HCT116 (cell line): ENCODE measurements at regions of chr2 and their contacts with region 1.

Region 1: DNA sequence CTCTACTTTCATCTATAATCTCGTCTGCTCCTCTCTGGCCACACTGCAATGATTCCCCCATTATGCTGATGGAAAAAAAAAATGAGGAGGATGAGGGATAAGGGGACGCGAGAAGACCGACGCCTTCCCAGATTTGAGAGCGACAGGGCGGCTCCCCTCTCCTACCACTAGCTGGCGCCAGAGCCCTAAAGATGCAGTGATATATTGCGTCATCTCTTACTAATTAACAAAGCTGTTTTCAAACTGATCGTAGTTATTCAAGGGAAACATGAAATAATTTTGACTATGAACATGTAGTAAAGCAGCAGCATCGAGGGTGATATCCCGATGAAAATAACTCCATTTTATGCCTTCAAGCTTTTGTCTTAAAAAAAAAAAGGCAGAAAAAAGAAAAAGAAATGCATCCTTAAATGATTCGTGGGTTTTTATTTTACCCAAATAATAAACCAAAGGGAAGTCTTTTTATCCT is 48.0 kb upstream of the HNRNPA3 start:
- DNase-seq: peak; percentile 68
- ATAC-seq: peak; percentile 46
- H3K4me3 ChIP-seq: peak overlapping the region; percentile 29 to 50
- H3K27ac ChIP-seq: peak overlapping the region; percentile 65; the same call in 1 of the 2 replicates
- H3K4me1 ChIP-seq: peaks cover 42 to 67% of the 10 kb centered on the region in 2 experiments
- H3K27me3 ChIP-seq: no peaks in the 10 kb centered on the region
- CTCF ChIP-seq: peak; percentile 96 to 100 (median 100)
- POLR2A ChIP-seq: no peak
- RAD21 ChIP-seq: peak; percentile 100

Region 2: DNA sequence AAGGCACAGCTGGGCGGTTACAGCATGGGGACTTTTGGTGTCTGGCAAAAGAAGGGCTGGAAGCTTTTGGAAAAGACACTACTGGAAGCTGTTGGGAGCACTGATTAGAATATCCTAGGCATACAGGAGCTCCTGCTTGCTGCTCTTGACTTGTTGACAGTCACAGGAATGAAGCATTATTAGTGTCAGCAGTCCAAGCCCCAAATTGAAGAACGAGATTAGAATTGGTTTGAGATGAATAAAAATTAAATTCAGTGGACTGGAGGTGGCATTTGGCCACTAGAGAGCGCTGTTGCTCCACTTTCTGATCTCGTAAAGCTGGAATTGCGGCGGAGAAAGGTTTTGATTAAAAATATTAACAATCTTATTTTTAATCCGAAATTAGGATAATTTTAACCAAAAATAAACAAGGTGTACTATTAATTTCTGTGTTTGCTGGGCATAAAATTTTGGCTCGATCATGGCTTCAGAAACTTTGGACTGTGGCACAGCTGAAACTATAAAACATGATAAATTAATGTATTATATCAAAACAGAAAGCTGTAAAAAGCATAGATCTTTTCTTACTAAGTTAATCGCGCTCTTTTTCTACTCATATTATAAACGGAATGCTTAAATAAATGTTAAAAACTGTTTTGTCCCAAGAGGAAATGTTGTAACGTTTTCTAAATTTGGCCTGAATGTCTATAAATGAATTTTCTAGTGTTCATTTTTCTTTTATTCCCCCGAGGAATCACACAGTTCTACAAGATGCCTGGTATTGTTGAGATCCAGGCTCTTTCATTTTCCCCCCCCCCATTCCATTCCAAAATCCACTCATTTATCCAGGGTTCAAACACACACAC is 1037.5 kb before region 1 on chr2:
- CTCF ChIA-PET with region 1: interaction called, 17 read pairs
- POLR2A ChIA-PET with region 1: interaction called, 4 read pairs
- RAD21 ChIA-PET with region 1: interaction called in 1 of 2 experiments, 3 read pairs
- intact Hi-C with region 1: loop called (anchors 5 kb)
- DNase-seq: no peak
- ATAC-seq: no peak
- H3K4me3 ChIP-seq: peak overlapping the region; percentile 9; a peak in 2 of 4 replicates
- H3K27ac ChIP-seq: no peak overlapping the region
- H3K4me1 ChIP-seq: peaks cover 6 to 17% of the 10 kb centered on the region in 2 experiments; a peak in 3 of 4 replicates
- H3K27me3 ChIP-seq: no peaks in the 10 kb centered on the region
- CTCF ChIP-seq: peak; percentile 64 to 88 (median 87)
- POLR2A ChIP-seq: no peak
- RAD21 ChIP-seq: peak; percentile 93

Region 3: DNA sequence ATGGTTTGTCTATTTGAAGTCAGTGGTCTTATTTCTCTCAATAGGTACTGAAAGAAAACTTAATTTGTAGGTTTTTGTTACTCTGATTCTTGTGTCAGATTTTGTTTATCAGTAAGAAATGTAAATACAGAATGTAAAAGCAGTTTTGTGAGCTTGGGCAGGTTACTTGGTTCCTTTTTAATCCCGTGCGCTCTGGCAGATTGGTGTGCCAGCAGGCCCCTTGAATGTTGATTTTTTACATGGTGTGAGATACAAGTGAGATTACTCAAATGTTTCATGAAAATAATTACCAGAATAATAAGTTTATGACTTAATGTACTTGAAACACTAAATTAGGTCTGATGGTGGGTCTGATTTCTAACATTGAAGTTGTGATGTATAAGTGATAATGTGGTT is 61.3 kb after region 1 on chr2:
- CTCF ChIA-PET with region 1: interaction called, 15 read pairs
- POLR2A ChIA-PET with region 1: interaction called, 5 read pairs
- RAD21 ChIA-PET with region 1: no interaction called
- intact Hi-C with region 1: no loop called
- DNase-seq: no peak
- ATAC-seq: no peak
- H3K4me3 ChIP-seq: no peak overlapping the region
- H3K27ac ChIP-seq: no peak overlapping the region
- H3K4me1 ChIP-seq: no peaks in the 10 kb centered on the region
- H3K27me3 ChIP-seq: no peaks in the 10 kb centered on the region
- CTCF ChIP-seq: no peak
- POLR2A ChIP-seq: no peak
- RAD21 ChIP-seq: no peak

Region 4: GRCh38 chr2:177296040-177296439 is 131.4 kb after region 1 on chr2:
- CTCF ChIA-PET with region 1: interaction called, 12 read pairs
- POLR2A ChIA-PET with region 1: no interaction called
- RAD21 ChIA-PET with region 1: no interaction called
- intact Hi-C with region 1: no loop called
- DNase-seq: peak; percentile 13
- ATAC-seq: peak; percentile 72
- H3K4me3 ChIP-seq: no peak overlapping the region
- H3K27ac ChIP-seq: no peak overlapping the region
- H3K4me1 ChIP-seq: no peaks in the 10 kb centered on the region
- H3K27me3 ChIP-seq: no peaks in the 10 kb centered on the region
- CTCF ChIP-seq: peak; percentile 10 to 58 (median 37); a peak in 3 of 6 replicates
- POLR2A ChIP-seq: no peak
- RAD21 ChIP-seq: peak; percentile 58

Region 5: GRCh38 chr2:177419274-177419673 is 254.7 kb after region 1 on chr2:
- CTCF ChIA-PET with region 1: interaction called, 33 read pairs
- POLR2A ChIA-PET with region 1: no interaction called
- RAD21 ChIA-PET with region 1: interaction called in 1 of 2 experiments, 3 read pairs
- intact Hi-C with region 1: loop called (anchors 1 kb)
- DNase-seq: no peak
- ATAC-seq: no peak
- H3K4me3 ChIP-seq: no peak overlapping the region
- H3K27ac ChIP-seq: no peak overlapping the region
- H3K4me1 ChIP-seq: peaks cover 0 to 9% of the 10 kb centered on the region in 2 experiments; a peak in 2 of 4 replicates
- H3K27me3 ChIP-seq: no peaks in the 10 kb centered on the region
- CTCF ChIP-seq: no peak
- POLR2A ChIP-seq: no peak
- RAD21 ChIP-seq: no peak

Region 6: GRCh38 chr2:177758591-177759371 is 594.2 kb after region 1 on chr2:
- CTCF ChIA-PET with region 1: interaction called, 7 read pairs
- POLR2A ChIA-PET with region 1: no interaction called
- RAD21 ChIA-PET with region 1: no interaction called
- intact Hi-C with region 1: loop called (anchors 1 kb)
- DNase-seq: peak; percentile 41
- ATAC-seq: peak; percentile 57
- H3K4me3 ChIP-seq: no peak overlapping the region
- H3K27ac ChIP-seq: no peak overlapping the region
- H3K4me1 ChIP-seq: peaks cover 0 to 9% of the 10 kb centered on the region in 2 experiments; a peak in 2 of 4 replicates
- H3K27me3 ChIP-seq: no peaks in the 10 kb centered on the region
- CTCF ChIP-seq: peak; percentile 37 to 65 (median 60); a peak in 5 of 6 replicates
- POLR2A ChIP-seq: no peak
- RAD21 ChIP-seq: peak; percentile 84